Heart right ventricle (tissue), 16 donors: ENCODE measurements at regions of chr9 and their contacts with region 1.

Region 1: DNA sequence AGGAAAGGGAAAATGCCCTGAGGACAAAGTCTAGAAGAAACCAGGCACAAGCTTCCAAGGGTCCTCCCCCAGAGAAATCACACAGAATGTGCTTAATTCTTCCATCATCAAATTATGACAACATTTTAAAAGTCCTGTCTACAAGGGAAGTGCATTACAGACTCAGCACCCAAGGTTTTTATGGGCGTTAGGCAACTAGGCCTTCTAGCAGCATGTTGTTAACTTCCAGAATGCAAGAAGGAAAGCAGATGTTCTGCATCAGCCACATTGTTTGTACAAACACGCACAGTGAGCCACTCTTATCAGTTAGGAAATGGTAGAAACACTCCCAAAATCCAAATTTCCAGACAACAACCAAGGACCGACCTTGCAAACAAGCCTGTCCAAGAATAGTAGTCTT is 26.5 kb downstream of the SMC5 start:
- DNase-seq: no peak
- ATAC-seq: peak; percentile 34 to 92 (median 72)
- H3K4me3 ChIP-seq: no peak overlapping the region
- H3K27ac ChIP-seq: peak overlapping the region in 6 of 10 donors; percentile 7 to 56 (median 22)
- H3K4me1 ChIP-seq: peaks cover 0 to 28% (median 21%) of the 10 kb centered on the region in 9 donors
- H3K27me3 ChIP-seq: no peaks in the 10 kb centered on the region
- CTCF ChIP-seq: no peak

Region 2: GRCh38 chr9:70324963-70325362 is 39.7 kb after region 1 on chr9:
- intact Hi-C with region 1: loop called in 1 of 10 experiments (anchors 5 kb)
- DNase-seq: no peak
- ATAC-seq: no peak
- H3K4me3 ChIP-seq: no peak overlapping the region
- H3K27ac ChIP-seq: no peak overlapping the region
- H3K4me1 ChIP-seq: no peaks in the 10 kb centered on the region
- H3K27me3 ChIP-seq: no peaks in the 10 kb centered on the region
- CTCF ChIP-seq: no peak